Activated CD4-positive, alpha-beta memory T cell treated with anti-CD3 and anti-CD28 coated beads, Interleukin-2, amount 10 ng/mL, durations not matched to agents 7 days and 5 days (primary cell): ENCODE measurements at regions of chr17 and their contacts with region 1.

Region 1: GRCh38 chr17:35764123-35764991 is 3.7 kb downstream of the C17orf50 start:
- DNase-seq: peak; percentile 89
- H3K4me3 Mint-ChIP-seq: peak overlapping the region; percentile 82
- H3K27ac Mint-ChIP-seq: peak overlapping the region; percentile 65
- H3K4me1 Mint-ChIP-seq: peaks cover 9% of the 10 kb centered on the region
- H3K27me3 Mint-ChIP-seq: peaks cover 4% of the 10 kb centered on the region

Region 2: GRCh38 chr17:35587074-35587971 is 177.0 kb before region 1 on chr17 and contains the start of gene AP2B1:
- CTCF ChIA-PET with region 1: interaction called, 10 read pairs
- POLR2A ChIA-PET with region 1: interaction called, 3 read pairs
- DNase-seq: peak; percentile 98
- H3K4me3 Mint-ChIP-seq: peak within 1 kb of the TSS; percentile 96
- H3K27ac Mint-ChIP-seq: peak within 1 kb of the TSS; percentile 97
- H3K4me1 Mint-ChIP-seq: peaks cover 38% of the 10 kb centered on the region
- H3K27me3 Mint-ChIP-seq: peaks cover 11% of the 10 kb centered on the region
- total RNA-seq, gene AP2B1: 196 to 203 TPM

Region 3: GRCh38 chr17:35747540-35748017 is 16.8 kb before region 1 on chr17:
- CTCF ChIA-PET with region 1: interaction called, 18 read pairs
- POLR2A ChIA-PET with region 1: no interaction called
- DNase-seq: peak; percentile 80
- H3K4me3 Mint-ChIP-seq: no peak overlapping the region
- H3K27ac Mint-ChIP-seq: no peak overlapping the region
- H3K4me1 Mint-ChIP-seq: peaks cover 10% of the 10 kb centered on the region
- H3K27me3 Mint-ChIP-seq: peaks cover 37% of the 10 kb centered on the region

Region 4: DNA sequence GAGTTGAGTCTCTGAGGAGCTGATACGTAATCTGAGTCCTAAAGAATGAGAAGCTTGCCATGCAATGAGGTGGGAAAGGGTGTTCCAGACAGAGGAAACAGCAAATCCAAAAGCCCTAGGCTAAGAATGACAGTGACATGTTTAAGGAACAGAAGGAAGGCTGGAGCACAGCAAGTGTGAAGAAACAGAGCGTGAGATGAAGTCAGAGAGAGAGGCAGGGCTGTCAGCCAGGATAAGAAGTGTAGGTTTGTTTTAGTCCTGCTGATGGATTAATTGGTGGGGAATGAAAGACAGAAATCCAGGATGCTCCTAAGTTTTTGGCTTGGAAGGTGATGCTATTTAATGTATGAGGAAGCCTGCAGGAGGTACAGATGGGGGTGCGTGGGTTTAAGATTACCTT is 16.6 kb after region 1 on chr17:
- CTCF ChIA-PET with region 1: interaction called, 13 read pairs
- POLR2A ChIA-PET with region 1: interaction called, 3 read pairs
- DNase-seq: no peak
- H3K4me3 Mint-ChIP-seq: no peak overlapping the region
- H3K27ac Mint-ChIP-seq: no peak overlapping the region
- H3K4me1 Mint-ChIP-seq: no peaks in the 10 kb centered on the region
- H3K27me3 Mint-ChIP-seq: peaks cover 31% of the 10 kb centered on the region

Region 5: DNA sequence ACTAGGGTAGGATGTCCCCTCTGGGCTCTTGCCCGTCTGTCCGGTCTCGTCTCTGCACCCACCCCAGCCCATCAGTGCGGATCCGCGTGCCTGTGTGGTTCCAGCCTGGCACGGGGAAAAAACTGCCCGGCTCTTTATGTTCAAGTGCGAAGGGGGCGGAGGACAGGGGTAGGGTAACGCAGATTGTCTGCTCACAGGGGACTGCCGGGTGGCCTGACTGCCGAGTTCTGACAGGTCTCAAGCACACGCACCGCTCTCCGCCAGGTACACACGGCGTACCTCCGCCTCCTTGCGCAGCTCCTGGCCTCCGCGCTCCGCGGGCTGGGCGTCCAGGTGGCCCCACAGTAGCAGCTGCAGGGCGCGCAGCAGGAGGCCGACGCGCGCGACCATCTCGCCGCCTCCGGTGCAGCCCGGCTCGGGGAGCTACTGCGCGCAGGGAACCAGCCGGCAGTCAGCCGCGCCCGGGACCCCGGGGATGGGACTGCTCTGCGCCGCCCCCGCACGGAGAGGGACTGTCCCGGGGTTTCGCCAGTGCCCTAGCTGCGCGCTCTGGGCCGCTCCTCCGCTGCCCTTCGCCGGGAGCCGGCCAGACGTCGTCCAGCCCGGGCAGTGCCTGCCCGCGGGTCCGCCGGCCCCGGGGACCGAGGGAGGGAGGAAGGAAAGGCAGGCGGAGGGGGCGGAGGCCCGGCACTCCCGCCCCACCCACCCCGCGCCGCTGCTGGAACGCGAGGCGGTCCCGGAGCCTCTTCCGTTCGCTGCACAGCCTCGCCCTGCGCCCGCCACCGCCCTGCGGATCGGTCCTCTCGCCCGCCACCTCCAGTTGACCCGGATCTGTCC is 30.8 kb after region 1 on chr17 and contains the start of gene MMP28:
- CTCF ChIA-PET with region 1: interaction called, 39 read pairs
- POLR2A ChIA-PET with region 1: interaction called, 7 read pairs
- DNase-seq: peak; percentile 48
- H3K4me3 Mint-ChIP-seq: peak within 1 kb of the TSS; percentile 69
- H3K27ac Mint-ChIP-seq: no peak within 1 kb of the TSS
- H3K4me1 Mint-ChIP-seq: peaks cover 15% of the 10 kb centered on the region
- H3K27me3 Mint-ChIP-seq: peaks cover 76% of the 10 kb centered on the region
- total RNA-seq, gene MMP28: not detected

Region 6: DNA sequence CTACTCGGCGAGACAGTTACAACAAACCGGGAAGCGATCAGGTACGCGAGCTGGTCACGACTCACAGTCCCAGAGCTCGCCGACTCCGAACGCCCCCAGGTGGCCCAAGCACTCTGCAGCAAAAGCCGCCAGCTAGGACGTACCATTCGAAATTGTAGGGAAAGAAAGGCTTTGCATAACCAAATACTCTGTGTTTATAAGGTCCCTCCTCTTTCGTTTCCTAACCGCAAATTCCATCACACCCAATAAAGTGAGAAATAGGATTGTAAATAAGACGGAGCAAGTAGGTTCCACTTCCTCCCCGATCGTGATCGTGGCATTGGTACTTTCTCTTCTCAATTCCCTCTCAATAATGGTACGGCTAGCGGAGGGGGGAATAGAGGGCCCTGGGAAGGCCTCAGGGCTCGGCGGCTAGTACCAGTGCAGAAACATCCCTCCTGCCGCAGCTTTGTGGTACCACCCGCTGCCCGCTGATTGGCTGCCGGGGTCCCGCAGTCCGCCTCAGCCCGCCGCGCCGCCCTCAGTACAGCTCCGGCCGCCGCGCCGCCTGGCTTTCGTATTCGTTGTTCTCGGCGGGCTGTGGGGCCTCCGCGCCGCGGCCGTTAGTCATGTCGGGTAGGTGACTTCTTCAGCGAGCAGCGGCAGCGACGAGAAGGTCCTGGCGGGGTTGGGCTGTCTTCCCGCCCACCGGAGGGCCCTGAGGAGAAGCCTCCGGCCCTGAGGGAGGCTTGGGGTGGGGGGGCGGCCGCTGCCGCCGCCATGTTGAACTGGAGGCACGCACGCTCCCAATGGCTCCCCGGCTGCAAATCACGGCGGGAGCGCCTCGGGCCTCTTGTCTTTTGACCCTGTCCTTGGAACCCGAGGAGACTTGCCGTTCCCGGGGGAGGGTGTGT is 44.9 kb after region 1 on chr17 and contains the start of gene TAF15:
- CTCF ChIA-PET with region 1: interaction called, 286 read pairs
- POLR2A ChIA-PET with region 1: interaction called, 89 read pairs
- DNase-seq: peak; percentile 97
- H3K4me3 Mint-ChIP-seq: peak within 1 kb of the TSS; percentile 89
- H3K27ac Mint-ChIP-seq: peak within 1 kb of the TSS; percentile 98
- H3K4me1 Mint-ChIP-seq: peaks cover 61% of the 10 kb centered on the region
- H3K27me3 Mint-ChIP-seq: no peaks in the 10 kb centered on the region
- total RNA-seq, gene TAF15: 244 to 252 TPM

Region 7: GRCh38 chr17:35849469-35850348 is 85.4 kb after region 1 on chr17:
- CTCF ChIA-PET with region 1: interaction called, 16 read pairs
- POLR2A ChIA-PET with region 1: no interaction called
- DNase-seq: peak; percentile 68
- H3K4me3 Mint-ChIP-seq: no peak overlapping the region
- H3K27ac Mint-ChIP-seq: peak overlapping the region; percentile 44
- H3K4me1 Mint-ChIP-seq: peaks cover 20% of the 10 kb centered on the region
- H3K27me3 Mint-ChIP-seq: no peaks in the 10 kb centered on the region